IMR-90 (cell line): ENCODE measurements at regions of chr10 and their contacts with region 1.

Region 1: GRCh38 chr10:86411281-86411841 is 44.8 kb upstream of the GRID1 start:
- DNase-seq: peak; percentile 86
- ATAC-seq: peak; percentile 94
- H3K4me3 ChIP-seq: no peak overlapping the region
- H3K27ac ChIP-seq: peak overlapping the region; percentile 62; the same call in 1 of the 2 replicates
- H3K4me1 ChIP-seq: peaks cover 7% of the 10 kb centered on the region
- H3K27me3 ChIP-seq: no peaks in the 10 kb centered on the region
- CTCF ChIP-seq: no peak
- POLR2A ChIP-seq: no peak
- RAD21 ChIP-seq: no peak

Region 2: DNA sequence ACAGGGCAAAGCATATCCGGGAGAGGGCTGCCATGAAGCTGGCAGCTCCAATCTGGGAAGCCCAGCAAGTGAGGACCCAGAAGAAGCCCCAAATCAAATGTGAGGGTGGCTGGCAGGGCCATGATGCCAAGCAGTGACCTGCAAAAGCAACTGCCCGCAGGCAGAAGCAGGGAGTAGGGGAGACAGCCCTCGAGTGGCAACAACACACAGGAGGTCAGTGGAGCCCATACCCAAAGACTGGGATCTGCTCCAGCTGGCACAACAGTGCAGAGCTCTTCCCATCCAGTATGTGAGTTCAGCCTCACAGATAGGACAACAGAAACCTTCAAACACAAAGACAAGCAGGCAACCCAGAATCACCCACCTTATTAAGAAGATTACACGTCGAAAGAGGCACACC is 89.8 kb before region 1 on chr10:
- CTCF ChIA-PET with region 1: no interaction called
- POLR2A ChIA-PET with region 1: no interaction called
- dilution Hi-C with region 1: no loop called
- in situ Hi-C with region 1: no loop called
- intact Hi-C with region 1: no loop called
- DNase-seq: no peak
- ATAC-seq: no peak
- H3K4me3 ChIP-seq: no peak overlapping the region
- H3K27ac ChIP-seq: no peak overlapping the region
- H3K4me1 ChIP-seq: no peaks in the 10 kb centered on the region
- H3K27me3 ChIP-seq: no peaks in the 10 kb centered on the region
- CTCF ChIP-seq: no peak
- POLR2A ChIP-seq: no peak
- RAD21 ChIP-seq: no peak

Region 3: GRCh38 chr10:86363184-86363832 is 48.1 kb before region 1 on chr10:
- CTCF ChIA-PET with region 1: no interaction called
- POLR2A ChIA-PET with region 1: no interaction called
- dilution Hi-C with region 1: no loop called
- in situ Hi-C with region 1: no loop called
- intact Hi-C with region 1: no loop called
- DNase-seq: no peak
- ATAC-seq: peak; percentile 21
- H3K4me3 ChIP-seq: no peak overlapping the region
- H3K27ac ChIP-seq: no peak overlapping the region
- H3K4me1 ChIP-seq: no peaks in the 10 kb centered on the region; the same call in 1 of the 2 replicates
- H3K27me3 ChIP-seq: peaks cover 78% of the 10 kb centered on the region
- CTCF ChIP-seq: peak; percentile 28; the same call in 1 of the 2 replicates
- POLR2A ChIP-seq: no peak
- RAD21 ChIP-seq: peak; percentile 41

Region 4: DNA sequence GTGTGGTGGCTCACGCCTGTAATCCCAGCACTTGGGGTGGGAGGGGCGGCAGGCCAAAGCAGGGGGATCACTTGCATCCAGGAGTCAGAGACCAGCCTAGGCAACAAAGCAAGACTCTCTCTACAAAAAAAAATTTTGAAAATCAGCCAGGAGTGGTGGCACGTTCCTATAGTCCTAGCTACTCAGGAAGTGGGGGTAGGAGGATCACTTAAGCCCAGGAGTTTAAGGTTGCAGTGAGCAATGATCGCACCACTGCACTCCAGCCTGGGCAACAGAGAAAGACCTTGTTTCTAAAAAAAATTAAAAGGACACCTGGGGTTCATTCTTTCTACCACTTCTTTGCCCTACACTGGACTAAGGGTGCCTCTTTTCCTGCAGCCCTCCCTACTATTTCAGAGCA is 95.1 kb after region 1 on chr10:
- CTCF ChIA-PET with region 1: no interaction called
- POLR2A ChIA-PET with region 1: interaction called, 14 read pairs
- dilution Hi-C with region 1: no loop called
- in situ Hi-C with region 1: no loop called
- intact Hi-C with region 1: no loop called
- DNase-seq: no peak
- ATAC-seq: no peak
- H3K4me3 ChIP-seq: no peak overlapping the region
- H3K27ac ChIP-seq: no peak overlapping the region
- H3K4me1 ChIP-seq: peaks cover 6% of the 10 kb centered on the region
- H3K27me3 ChIP-seq: no peaks in the 10 kb centered on the region
- CTCF ChIP-seq: no peak
- POLR2A ChIP-seq: no peak
- RAD21 ChIP-seq: no peak